ENCODE measurements at regions of chr7 and their contacts with region 1.

Region 1: GRCh38 chr7:123154231-123154860 is 45.4 kb downstream of the SLC13A1 start:
- DNase-seq: peak; percentile 43
- ATAC-seq: peak; percentile 97
- H3K4me3 ChIP-seq: no peak overlapping the region
- H3K27ac ChIP-seq: no peak overlapping the region
- H3K4me1 ChIP-seq: no peaks in the 10 kb centered on the region
- H3K27me3 ChIP-seq: no peaks in the 10 kb centered on the region
- CTCF ChIP-seq: peak; percentile 72 to 80 (median 74)
- EP300 ChIP-seq: no peak
- POLR2A ChIP-seq: no peak
- RAD21 ChIP-seq: peak; percentile 61

Region 2: DNA sequence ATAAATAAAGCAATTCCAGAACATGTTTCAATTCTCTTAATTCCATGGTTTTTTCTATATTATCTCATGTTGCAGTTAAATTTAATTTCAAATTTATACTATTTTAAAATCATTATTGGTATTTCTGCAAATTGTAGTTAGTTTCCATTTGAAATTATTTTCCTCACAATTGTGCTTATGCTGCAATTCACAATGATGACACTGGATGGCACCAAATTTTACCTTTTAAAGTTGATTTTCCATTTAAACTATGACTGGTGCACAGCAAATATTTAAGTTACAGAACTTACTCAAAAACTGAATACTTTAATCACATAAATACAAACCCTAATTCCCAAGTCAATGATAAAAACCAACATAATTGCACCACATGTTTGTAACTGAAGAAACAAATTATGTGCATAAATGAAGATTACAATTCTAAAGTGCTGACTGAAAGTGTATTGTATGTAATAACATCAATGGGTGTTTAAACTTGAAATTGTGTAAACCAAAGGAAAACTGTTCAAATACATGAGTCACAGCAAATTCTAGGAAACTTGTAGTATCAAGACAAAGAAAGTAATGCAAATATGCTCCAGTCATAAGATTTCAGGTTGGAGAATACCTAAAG is 935.0 kb before region 1 on chr7:
- CTCF ChIA-PET with region 1: interaction called, 8 read pairs
- POLR2A ChIA-PET with region 1: no interaction called
- RAD21 ChIA-PET with region 1: interaction called, 3 read pairs
- SMC1A ChIA-PET with region 1: no interaction called
- in situ Hi-C with region 1: no loop called
- intact Hi-C with region 1: loop called (anchors 2 kb)
- DNase-seq: no peak
- ATAC-seq: no peak
- H3K4me3 ChIP-seq: no peak overlapping the region
- H3K27ac ChIP-seq: no peak overlapping the region
- H3K4me1 ChIP-seq: no peaks in the 10 kb centered on the region
- H3K27me3 ChIP-seq: no peaks in the 10 kb centered on the region
- CTCF ChIP-seq: peak; percentile 51 to 67 (median 55); a peak in 5 of 6 replicates
- EP300 ChIP-seq: no peak
- POLR2A ChIP-seq: no peak
- RAD21 ChIP-seq: peak; percentile 71

Region 3: GRCh38 chr7:122535086-122535485 is 619.3 kb before region 1 on chr7:
- CTCF ChIA-PET with region 1: interaction called, 12 read pairs
- POLR2A ChIA-PET with region 1: no interaction called
- RAD21 ChIA-PET with region 1: interaction called, 5 read pairs
- SMC1A ChIA-PET with region 1: interaction called, 7 read pairs
- in situ Hi-C with region 1: no loop called
- intact Hi-C with region 1: loop called (anchors 5 kb)
- DNase-seq: no peak
- ATAC-seq: no peak
- H3K4me3 ChIP-seq: no peak overlapping the region
- H3K27ac ChIP-seq: no peak overlapping the region
- H3K4me1 ChIP-seq: no peaks in the 10 kb centered on the region
- H3K27me3 ChIP-seq: no peaks in the 10 kb centered on the region
- CTCF ChIP-seq: no peak
- EP300 ChIP-seq: no peak
- POLR2A ChIP-seq: no peak
- RAD21 ChIP-seq: no peak

Region 4: GRCh38 chr7:122550545-122550944 is 603.8 kb before region 1 on chr7:
- CTCF ChIA-PET with region 1: interaction called, 15 read pairs
- POLR2A ChIA-PET with region 1: no interaction called
- RAD21 ChIA-PET with region 1: interaction called, 4 read pairs
- SMC1A ChIA-PET with region 1: interaction called, 12 read pairs
- in situ Hi-C with region 1: no loop called
- intact Hi-C with region 1: loop called (anchors 5 kb)
- DNase-seq: no peak
- ATAC-seq: peak; percentile 68
- H3K4me3 ChIP-seq: no peak overlapping the region
- H3K27ac ChIP-seq: no peak overlapping the region
- H3K4me1 ChIP-seq: no peaks in the 10 kb centered on the region
- H3K27me3 ChIP-seq: no peaks in the 10 kb centered on the region; a peak in 1 of 4 replicates
- CTCF ChIP-seq: peak in 2 of 3 experiments; percentile 23 to 60; a peak in 2 of 6 replicates
- EP300 ChIP-seq: no peak
- POLR2A ChIP-seq: no peak
- RAD21 ChIP-seq: no peak

Region 5: GRCh38 chr7:122803323-122803722 is 351.0 kb before region 1 on chr7:
- CTCF ChIA-PET with region 1: interaction called, 18 read pairs
- POLR2A ChIA-PET with region 1: no interaction called
- RAD21 ChIA-PET with region 1: interaction called, 16 read pairs
- SMC1A ChIA-PET with region 1: interaction called, 5 read pairs
- in situ Hi-C with region 1: no loop called
- intact Hi-C with region 1: loop called (anchors 10 kb)
- DNase-seq: no peak
- ATAC-seq: peak; percentile 83
- H3K4me3 ChIP-seq: no peak overlapping the region
- H3K27ac ChIP-seq: no peak overlapping the region
- H3K4me1 ChIP-seq: no peaks in the 10 kb centered on the region
- H3K27me3 ChIP-seq: no peaks in the 10 kb centered on the region
- CTCF ChIP-seq: peak in 2 of 3 experiments; percentile 34 to 52; a peak in 3 of 6 replicates
- EP300 ChIP-seq: no peak
- POLR2A ChIP-seq: no peak
- RAD21 ChIP-seq: peak; percentile 22; the same call in 1 of the 2 replicates

Region 6: GRCh38 chr7:123131140-123131539 is 23.2 kb before region 1 on chr7:
- CTCF ChIA-PET with region 1: interaction called, 12 read pairs
- POLR2A ChIA-PET with region 1: no interaction called
- RAD21 ChIA-PET with region 1: no interaction called
- SMC1A ChIA-PET with region 1: no interaction called
- in situ Hi-C with region 1: no loop called
- intact Hi-C with region 1: no loop called
- DNase-seq: no peak
- ATAC-seq: peak; percentile 31; the same call in 1 of the 3 replicates
- H3K4me3 ChIP-seq: no peak overlapping the region
- H3K27ac ChIP-seq: no peak overlapping the region
- H3K4me1 ChIP-seq: no peaks in the 10 kb centered on the region
- H3K27me3 ChIP-seq: no peaks in the 10 kb centered on the region
- CTCF ChIP-seq: no peak; a peak in 1 of 6 replicates
- EP300 ChIP-seq: no peak
- POLR2A ChIP-seq: no peak
- RAD21 ChIP-seq: no peak

Region 7: DNA sequence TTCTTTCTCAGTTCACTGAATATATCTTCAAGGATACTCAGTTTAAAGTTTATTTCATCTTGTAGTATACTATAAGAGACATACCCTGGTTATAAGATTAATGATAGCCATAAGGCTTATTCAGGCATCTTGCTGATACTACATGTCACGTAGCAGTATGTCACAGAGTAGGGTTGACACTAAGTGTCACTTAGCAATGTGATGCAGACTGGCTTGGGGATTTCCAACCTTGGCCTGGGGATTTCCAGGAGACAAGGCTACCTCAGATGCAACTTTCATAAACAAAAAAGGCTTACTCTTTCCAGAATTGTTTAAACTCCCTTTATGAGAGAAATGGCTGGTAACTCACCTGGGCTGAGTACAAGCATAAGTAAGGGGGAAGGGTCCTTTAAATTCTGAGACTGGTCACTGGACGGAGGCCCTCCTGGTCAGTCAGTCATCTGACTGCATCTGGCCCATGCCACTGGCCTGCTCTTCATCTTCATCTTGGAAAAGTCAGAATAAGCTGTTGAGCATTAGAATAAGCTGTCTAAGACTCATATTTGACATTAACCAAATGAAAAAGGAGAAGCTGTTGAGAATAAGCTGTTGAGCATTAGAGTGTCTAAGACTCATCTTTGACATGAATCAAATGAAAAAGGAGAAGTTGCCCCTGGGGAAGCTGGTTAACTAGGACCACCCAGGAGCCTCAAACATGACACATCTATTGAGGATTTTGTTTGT is 35.9 kb after region 1 on chr7:
- CTCF ChIA-PET with region 1: interaction called, 6 read pairs
- POLR2A ChIA-PET with region 1: no interaction called
- RAD21 ChIA-PET with region 1: interaction called, 6 read pairs
- SMC1A ChIA-PET with region 1: interaction called, 15 read pairs
- in situ Hi-C with region 1: no loop called
- intact Hi-C with region 1: no loop called
- DNase-seq: peak; percentile 84
- ATAC-seq: peak; percentile 95
- H3K4me3 ChIP-seq: no peak overlapping the region
- H3K27ac ChIP-seq: peak overlapping the region; percentile 83
- H3K4me1 ChIP-seq: peaks cover 25% of the 10 kb centered on the region
- H3K27me3 ChIP-seq: no peaks in the 10 kb centered on the region
- CTCF ChIP-seq: no peak
- EP300 ChIP-seq: peak; percentile 81 to 85; a peak in 3 of 4 replicates
- POLR2A ChIP-seq: no peak
- RAD21 ChIP-seq: no peak

Measured in GM12878 (cell line).